ENCODE measurements at regions of chr11 and their contacts with region 1.

Region 1: DNA sequence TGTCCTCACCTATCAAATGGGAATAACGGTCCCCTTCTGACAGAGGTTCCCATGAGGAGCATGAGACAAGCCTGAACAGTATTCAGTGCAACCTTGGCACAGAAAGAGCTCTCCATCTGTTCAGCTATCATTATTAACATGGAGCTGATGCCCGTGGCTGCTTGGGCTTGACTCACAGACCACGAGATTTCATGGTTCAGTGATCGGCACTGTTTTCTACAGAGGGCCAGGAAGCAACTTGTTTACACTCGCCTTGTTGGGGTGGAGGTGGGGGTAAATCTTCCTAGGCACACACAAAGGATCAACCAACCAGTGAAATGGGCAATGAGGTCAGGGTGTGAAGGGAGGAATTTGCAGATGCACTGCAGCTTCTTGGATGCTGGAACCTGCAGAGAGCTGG is 88.2 kb downstream of the CWC15 start:
- DNase-seq: no peak
- H3K4me3 Mint-ChIP-seq: no peak overlapping the region
- H3K27ac Mint-ChIP-seq: no peak overlapping the region
- H3K4me1 Mint-ChIP-seq: no peaks in the 10 kb centered on the region
- H3K27me3 Mint-ChIP-seq: no peaks in the 10 kb centered on the region

Region 2: DNA sequence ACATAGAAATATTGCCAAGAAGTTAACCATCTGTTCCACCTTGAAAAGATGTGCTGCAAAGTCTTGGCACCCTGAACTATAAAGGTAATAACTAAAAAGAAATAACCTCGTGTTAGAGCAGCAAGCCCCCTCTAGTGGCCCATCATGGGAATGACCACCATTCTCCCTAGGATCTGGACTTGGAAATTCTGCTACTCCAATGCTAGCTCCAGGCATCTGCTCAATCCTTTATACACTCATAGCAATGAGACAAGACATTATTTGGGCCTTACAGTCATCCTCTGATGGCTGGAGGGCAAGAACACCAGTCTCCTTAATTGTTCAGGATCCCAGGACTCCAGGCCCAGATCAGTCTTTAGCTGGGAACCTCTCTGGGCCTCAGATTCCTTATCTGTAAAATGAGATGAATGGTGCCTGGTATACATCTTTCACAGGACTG is 12.2 kb after region 1 on chr11:
- CTCF ChIA-PET with region 1: interaction called, 10 read pairs
- intact Hi-C with region 1: no loop called
- DNase-seq: peak; percentile 62
- H3K4me3 Mint-ChIP-seq: no peak overlapping the region
- H3K27ac Mint-ChIP-seq: no peak overlapping the region
- H3K4me1 Mint-ChIP-seq: no peaks in the 10 kb centered on the region
- H3K27me3 Mint-ChIP-seq: no peaks in the 10 kb centered on the region

Region 3: GRCh38 chr11:95296621-95297025 is 411.5 kb after region 1 on chr11:
- CTCF ChIA-PET with region 1: no interaction called
- intact Hi-C with region 1: no loop called
- DNase-seq: no peak
- H3K4me3 Mint-ChIP-seq: no peak overlapping the region
- H3K27ac Mint-ChIP-seq: no peak overlapping the region
- H3K4me1 Mint-ChIP-seq: peaks cover 31% of the 10 kb centered on the region
- H3K27me3 Mint-ChIP-seq: no peaks in the 10 kb centered on the region

Measured in activated naive CD4-positive, alpha-beta T cell treated with anti-CD3 and anti-CD28 coated beads for 36 hours (primary cell).